GM10248 (cell line): ENCODE measurements at regions of chr2 and their contacts with region 1.

Region 1: GRCh38 chr2:10157293-10157692 is 34.8 kb downstream of the RRM2 start:
- DNase-seq: no peak
- CTCF ChIP-seq: no peak

Region 2: GRCh38 chr2:10141736-10142642 is 15.3 kb before region 1 on chr2:
- CTCF ChIA-PET with region 1: interaction called, 12 read pairs
- POLR2A ChIA-PET with region 1: no interaction called
- DNase-seq: no peak
- CTCF ChIP-seq: peak; percentile 67